ENCODE measurements at regions of chr1 and their contacts with region 1.

Region 1: DNA sequence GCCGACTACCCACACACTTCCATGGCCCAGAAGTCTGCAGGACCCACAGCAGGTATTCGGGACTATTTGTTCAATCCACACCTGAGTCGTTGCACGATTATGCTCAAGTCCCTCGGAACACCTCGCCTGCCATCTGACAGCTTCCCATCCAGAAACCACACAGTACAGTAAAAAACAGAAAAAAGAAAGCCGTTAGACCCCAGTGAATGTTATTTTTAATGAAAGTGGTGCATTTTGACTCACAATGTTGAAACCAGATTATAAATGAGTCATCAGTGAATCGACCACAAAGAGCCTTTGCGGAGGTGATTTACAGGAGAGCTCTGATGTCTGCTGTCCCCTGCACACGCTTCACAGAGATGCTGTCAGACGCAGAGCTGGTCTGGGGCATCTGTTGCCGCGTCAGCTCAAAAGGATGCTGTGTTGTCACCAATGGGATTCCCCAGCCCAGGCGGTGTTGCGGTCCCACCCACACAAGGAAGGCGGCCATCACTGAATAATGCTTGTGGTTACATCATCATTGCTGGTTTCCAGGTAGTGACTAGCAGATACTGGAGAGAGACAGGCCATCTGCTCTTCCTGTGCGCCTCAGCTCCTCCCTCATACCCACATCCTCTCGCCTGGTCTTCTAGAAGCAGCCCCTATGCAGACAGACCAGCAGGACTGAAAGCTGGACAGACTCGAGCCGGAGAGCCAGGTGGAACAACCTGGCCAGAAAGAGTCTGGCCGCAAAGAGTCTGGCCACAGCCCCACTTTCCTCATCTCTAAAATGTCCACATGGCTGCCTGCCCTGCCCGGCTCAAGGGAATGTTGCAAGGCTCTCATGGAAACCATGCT is 116.8 kb downstream of the TOMM20 start:
- DNase-seq: peak; percentile 99
- ATAC-seq: peak; percentile 80
- H3K4me3 Mint-ChIP-seq: peak overlapping the region; percentile 51
- H3K27ac Mint-ChIP-seq: peak overlapping the region; percentile 95
- H3K4me1 Mint-ChIP-seq: peaks cover 84% of the 10 kb centered on the region
- H3K27me3 Mint-ChIP-seq: no peaks in the 10 kb centered on the region
- CTCF ChIP-seq: no peak

Region 2: GRCh38 chr1:234610348-234611152 is 401.3 kb before region 1 on chr1:
- CTCF ChIA-PET with region 1: interaction called, 3 read pairs
- POLR2A ChIA-PET with region 1: interaction called, 14 read pairs
- intact Hi-C with region 1: loop called (anchors 2 kb)
- DNase-seq: peak; percentile 94
- ATAC-seq: peak; percentile 63
- H3K4me3 Mint-ChIP-seq: peak overlapping the region; percentile 92
- H3K27ac Mint-ChIP-seq: peak overlapping the region; percentile 99
- H3K4me1 Mint-ChIP-seq: peaks cover 31% of the 10 kb centered on the region
- H3K27me3 Mint-ChIP-seq: no peaks in the 10 kb centered on the region
- CTCF ChIP-seq: no peak

Region 3: DNA sequence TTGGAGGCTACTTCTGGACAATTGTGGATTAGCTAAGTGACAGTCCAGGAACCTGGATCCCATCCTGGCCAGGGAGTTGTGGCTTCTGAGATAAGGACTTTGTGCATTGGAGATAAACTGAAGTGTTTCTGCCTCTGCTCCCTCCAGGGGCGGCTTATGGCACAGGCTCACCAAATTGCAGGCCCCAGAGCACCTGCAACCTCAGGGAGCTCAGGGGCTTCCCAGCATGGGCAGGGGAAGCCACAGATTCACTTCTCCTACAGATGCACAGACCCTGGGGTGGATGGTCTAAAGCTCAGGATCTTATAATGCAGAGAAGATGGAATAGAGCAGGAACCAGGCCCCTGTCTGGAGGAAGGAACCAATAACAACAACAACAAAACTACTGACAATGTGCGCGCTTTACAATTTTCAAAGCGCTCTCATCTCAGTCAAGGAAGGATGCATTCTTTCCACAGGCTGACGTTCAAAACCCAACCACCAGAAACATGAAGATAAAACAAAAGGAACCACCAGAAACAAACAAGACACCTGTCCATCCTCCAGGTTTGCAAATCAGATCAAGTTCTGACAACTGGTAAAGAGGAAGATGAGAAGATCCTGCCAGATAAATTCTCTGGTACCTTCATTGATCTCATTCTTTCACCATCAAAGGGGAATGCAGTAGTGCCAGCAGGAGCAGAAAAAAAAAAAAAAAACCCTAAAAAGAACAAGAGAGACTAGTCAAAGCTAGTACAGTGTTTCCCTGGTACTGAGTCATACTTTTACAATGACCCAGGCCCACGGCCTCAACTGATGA is 280.8 kb before region 1 on chr1:
- CTCF ChIA-PET with region 1: no interaction called
- POLR2A ChIA-PET with region 1: no interaction called
- intact Hi-C with region 1: loop called (anchors 5 kb)
- DNase-seq: peak; percentile 83
- ATAC-seq: peak; percentile 87
- H3K4me3 Mint-ChIP-seq: peak overlapping the region; percentile 47
- H3K27ac Mint-ChIP-seq: peak overlapping the region; percentile 94
- H3K4me1 Mint-ChIP-seq: peaks cover 77% of the 10 kb centered on the region
- H3K27me3 Mint-ChIP-seq: no peaks in the 10 kb centered on the region
- CTCF ChIP-seq: peak; percentile 33

Region 4: DNA sequence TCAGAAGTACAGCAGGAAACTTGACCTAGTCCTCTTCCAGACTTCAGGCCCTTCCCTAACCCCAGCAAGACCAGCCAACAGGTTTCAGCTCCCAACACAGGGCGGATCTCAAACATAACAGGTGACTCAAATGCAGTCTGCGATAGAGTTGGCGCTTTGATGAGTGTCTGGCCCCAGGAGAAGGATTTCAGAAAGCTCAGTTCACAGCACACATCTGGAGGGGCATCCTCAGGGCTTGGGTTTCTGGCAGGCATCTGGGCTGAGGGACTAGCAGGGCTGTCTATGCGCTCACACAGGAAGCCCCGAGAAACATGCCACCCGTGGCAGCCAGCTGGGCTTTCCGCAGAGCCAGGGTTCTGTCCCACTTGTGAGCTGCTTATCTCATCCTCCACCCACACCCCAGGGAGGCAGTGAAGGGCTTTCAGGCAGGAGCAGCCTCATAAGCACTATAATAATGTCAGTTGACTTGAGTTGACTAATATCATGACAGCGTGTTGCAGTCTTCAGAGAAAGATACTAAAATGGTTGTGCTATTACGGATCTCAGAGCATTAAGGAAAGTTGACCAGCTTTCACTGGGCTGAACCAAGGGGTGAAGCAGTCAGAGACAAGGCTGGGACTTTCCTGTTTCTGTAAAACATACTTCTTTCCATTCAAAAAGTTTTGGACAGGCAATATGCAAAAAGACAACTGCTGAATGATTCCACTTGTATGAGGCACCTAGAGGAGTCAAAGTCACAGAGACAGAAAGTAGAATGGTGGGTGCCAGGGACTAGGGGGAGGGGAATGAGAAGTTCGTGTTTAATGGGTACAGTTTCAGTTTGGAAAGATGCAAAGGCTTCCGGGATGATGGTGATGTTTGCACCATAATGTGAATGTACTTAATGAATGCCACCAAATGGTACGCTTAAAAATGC is 168.8 kb before region 1 on chr1:
- CTCF ChIA-PET with region 1: interaction called, 6 read pairs
- POLR2A ChIA-PET with region 1: interaction called, 11 read pairs
- intact Hi-C with region 1: loop called (anchors 5 kb)
- DNase-seq: peak; percentile 96
- ATAC-seq: peak; percentile 85
- H3K4me3 Mint-ChIP-seq: peak overlapping the region; percentile 57
- H3K27ac Mint-ChIP-seq: peak overlapping the region; percentile 94
- H3K4me1 Mint-ChIP-seq: peaks cover 82% of the 10 kb centered on the region
- H3K27me3 Mint-ChIP-seq: no peaks in the 10 kb centered on the region
- CTCF ChIP-seq: no peak

Region 5: GRCh38 chr1:234944439-234945344 is 67.1 kb before region 1 on chr1:
- CTCF ChIA-PET with region 1: no interaction called
- POLR2A ChIA-PET with region 1: no interaction called
- intact Hi-C with region 1: no loop called
- DNase-seq: no peak
- ATAC-seq: peak; percentile 34
- H3K4me3 Mint-ChIP-seq: no peak overlapping the region
- H3K27ac Mint-ChIP-seq: peak overlapping the region; percentile 83
- H3K4me1 Mint-ChIP-seq: peaks cover 16% of the 10 kb centered on the region
- H3K27me3 Mint-ChIP-seq: no peaks in the 10 kb centered on the region
- CTCF ChIP-seq: no peak

Region 6: DNA sequence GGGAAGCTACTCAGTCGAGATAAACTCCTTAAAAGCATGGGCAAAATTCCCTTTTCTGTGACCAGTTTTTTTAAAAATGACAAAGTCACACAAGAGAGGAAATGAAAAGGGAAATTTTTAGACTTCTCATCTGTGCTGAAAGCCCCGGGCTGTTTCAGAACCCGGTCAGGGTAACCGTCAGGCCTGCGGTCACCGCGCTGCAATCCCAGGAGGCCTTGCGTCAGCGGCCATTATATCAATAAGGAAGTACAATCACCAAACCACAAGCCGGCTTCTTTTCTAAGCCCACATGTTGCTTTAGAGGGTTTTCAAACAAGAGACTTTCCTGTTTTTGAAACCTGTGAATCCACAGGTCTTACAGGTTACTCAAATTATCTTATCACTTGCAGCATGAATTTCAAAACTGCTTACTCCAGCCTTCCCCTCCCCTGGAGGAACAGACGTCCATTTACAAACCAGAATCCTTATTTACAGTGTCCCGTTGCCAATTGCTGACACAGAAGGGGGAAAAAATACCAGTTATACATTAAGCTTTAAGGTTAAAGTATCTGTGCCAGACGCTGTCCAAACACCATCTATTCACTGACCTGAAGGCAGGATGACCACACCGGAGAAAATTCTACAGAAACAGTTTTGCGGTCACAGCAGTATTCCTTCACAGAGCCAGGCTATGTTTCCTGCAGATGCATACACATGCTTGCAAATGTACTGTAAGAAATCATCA is 48.5 kb before region 1 on chr1:
- CTCF ChIA-PET with region 1: interaction called, 4 read pairs
- POLR2A ChIA-PET with region 1: interaction called, 8 read pairs
- intact Hi-C with region 1: loop called (anchors 5 kb)
- DNase-seq: peak; percentile 98
- ATAC-seq: peak; percentile 79
- H3K4me3 Mint-ChIP-seq: peak overlapping the region; percentile 56
- H3K27ac Mint-ChIP-seq: peak overlapping the region; percentile 93
- H3K4me1 Mint-ChIP-seq: peaks cover 70% of the 10 kb centered on the region
- H3K27me3 Mint-ChIP-seq: no peaks in the 10 kb centered on the region
- CTCF ChIP-seq: no peak

Region 7: GRCh38 chr1:234978397-234979295 is 33.2 kb before region 1 on chr1:
- CTCF ChIA-PET with region 1: interaction called, 5 read pairs
- POLR2A ChIA-PET with region 1: interaction called, 25 read pairs
- intact Hi-C with region 1: loop called (anchors 2 kb)
- DNase-seq: peak; percentile 81
- ATAC-seq: peak; percentile 52
- H3K4me3 Mint-ChIP-seq: peak overlapping the region; percentile 68
- H3K27ac Mint-ChIP-seq: peak overlapping the region; percentile 92
- H3K4me1 Mint-ChIP-seq: peaks cover 69% of the 10 kb centered on the region
- H3K27me3 Mint-ChIP-seq: no peaks in the 10 kb centered on the region
- CTCF ChIP-seq: no peak